SK-N-SH (cell line): ENCODE measurements at regions of chr3 and their contacts with region 1.

Region 1: GRCh38 chr3:149879872-149880271 is 66.9 kb downstream of the RNF13 start:
- DNase-seq: peak; percentile 44
- H3K4me3 ChIP-seq: no peak overlapping the region
- H3K27ac ChIP-seq: peak overlapping the region in 1 of 2 experiments; percentile 51; a peak in 2 of 4 replicates
- H3K4me1 ChIP-seq: no peaks in the 10 kb centered on the region
- H3K27me3 ChIP-seq: no peaks in the 10 kb centered on the region
- CTCF ChIP-seq: peak; percentile 81
- EP300 ChIP-seq: no peak
- RAD21 ChIP-seq: peak; percentile 88

Region 2: DNA sequence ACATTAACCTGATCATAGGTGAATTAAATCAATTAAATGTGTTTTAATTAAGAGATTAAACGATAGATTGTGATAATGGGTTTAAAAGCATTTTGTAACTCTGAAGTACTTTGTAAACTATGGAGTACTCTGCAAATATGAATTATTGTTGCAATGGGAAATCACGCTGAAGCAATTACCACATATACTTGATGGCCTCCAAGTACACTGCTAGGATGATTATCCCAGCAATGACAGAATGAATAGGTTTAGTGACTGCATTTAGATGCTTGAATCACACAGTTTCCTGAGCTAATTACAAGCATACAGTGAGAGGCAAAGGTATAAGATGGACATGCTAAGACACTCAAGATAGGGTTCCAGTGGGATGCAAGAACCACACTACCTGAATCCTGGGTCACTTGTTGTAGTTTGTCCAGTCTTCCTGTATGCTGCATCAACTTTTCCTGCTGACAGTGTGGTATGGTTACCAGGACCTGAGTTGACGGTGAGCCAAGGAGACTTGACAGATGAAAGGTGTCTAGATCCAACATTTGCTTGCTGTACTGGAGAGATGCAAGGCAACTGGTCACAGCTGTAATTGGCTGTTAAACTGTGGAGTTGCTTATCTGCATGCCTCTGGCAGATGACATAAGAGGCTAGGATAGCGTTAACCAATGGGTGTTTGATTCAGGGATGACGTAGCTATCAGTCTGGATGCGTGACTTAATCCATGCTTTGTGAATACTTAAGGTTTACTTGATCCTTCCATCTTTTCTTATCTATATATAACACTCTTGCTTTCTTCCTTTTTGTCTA is 28.9 kb before region 1 on chr3:
- CTCF ChIA-PET with region 1: interaction called, 10 read pairs
- POLR2A ChIA-PET with region 1: no interaction called
- DNase-seq: peak; percentile 6
- H3K4me3 ChIP-seq: no peak overlapping the region
- H3K27ac ChIP-seq: no peak overlapping the region
- H3K4me1 ChIP-seq: peaks cover 0 to 5% of the 10 kb centered on the region in 2 experiments; a peak in 2 of 4 replicates
- H3K27me3 ChIP-seq: no peaks in the 10 kb centered on the region
- CTCF ChIP-seq: no peak
- EP300 ChIP-seq: no peak
- RAD21 ChIP-seq: no peak

Region 3: GRCh38 chr3:149867563-149867962 is 12.3 kb before region 1 on chr3:
- CTCF ChIA-PET with region 1: interaction called, 22 read pairs
- POLR2A ChIA-PET with region 1: no interaction called
- DNase-seq: no peak
- H3K4me3 ChIP-seq: no peak overlapping the region
- H3K27ac ChIP-seq: no peak overlapping the region
- H3K4me1 ChIP-seq: no peaks in the 10 kb centered on the region
- H3K27me3 ChIP-seq: no peaks in the 10 kb centered on the region
- CTCF ChIP-seq: no peak
- EP300 ChIP-seq: no peak
- RAD21 ChIP-seq: no peak

Region 4: GRCh38 chr3:149902498-149903139 is 22.7 kb after region 1 on chr3:
- CTCF ChIA-PET with region 1: interaction called, 26 read pairs
- POLR2A ChIA-PET with region 1: no interaction called
- DNase-seq: peak; percentile 26
- H3K4me3 ChIP-seq: no peak overlapping the region
- H3K27ac ChIP-seq: peak overlapping the region; percentile 2 to 97; a peak in 2 of 4 replicates
- H3K4me1 ChIP-seq: peaks cover 15 to 19% of the 10 kb centered on the region in 2 experiments
- H3K27me3 ChIP-seq: no peaks in the 10 kb centered on the region
- CTCF ChIP-seq: peak; percentile 59
- EP300 ChIP-seq: peak in 1 of 2 experiments; percentile 84; a peak in 2 of 4 replicates
- RAD21 ChIP-seq: no peak

Region 5: DNA sequence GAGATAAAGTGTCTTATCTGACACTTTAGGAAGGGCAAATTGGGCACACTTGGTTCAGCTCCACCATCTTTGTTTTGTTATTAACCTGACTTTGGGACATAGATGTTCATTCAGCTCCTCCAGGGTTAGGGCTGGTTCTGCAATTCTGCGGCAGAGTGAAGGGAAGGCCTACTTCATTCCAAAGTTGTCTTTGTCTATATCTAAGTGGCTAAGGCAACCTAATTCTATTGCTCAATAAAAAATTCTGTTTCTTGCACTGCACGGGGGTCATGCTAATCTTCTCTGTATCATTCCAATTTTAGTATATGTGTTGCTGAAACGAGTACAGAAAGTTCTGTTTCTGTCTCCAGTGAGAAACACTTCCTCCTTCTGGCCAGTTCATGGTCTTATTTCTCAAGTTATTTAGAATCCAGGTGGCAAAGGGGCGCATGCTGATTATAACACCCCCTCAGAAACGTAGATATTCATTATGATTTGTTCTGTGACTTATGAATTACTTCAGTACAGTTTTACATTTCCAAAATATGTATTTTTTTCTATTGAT is 37.3 kb after region 1 on chr3:
- CTCF ChIA-PET with region 1: no interaction called
- POLR2A ChIA-PET with region 1: no interaction called
- DNase-seq: no peak
- H3K4me3 ChIP-seq: no peak overlapping the region
- H3K27ac ChIP-seq: no peak overlapping the region
- H3K4me1 ChIP-seq: no peaks in the 10 kb centered on the region
- H3K27me3 ChIP-seq: no peaks in the 10 kb centered on the region
- CTCF ChIP-seq: no peak
- EP300 ChIP-seq: no peak
- RAD21 ChIP-seq: no peak

Region 6: DNA sequence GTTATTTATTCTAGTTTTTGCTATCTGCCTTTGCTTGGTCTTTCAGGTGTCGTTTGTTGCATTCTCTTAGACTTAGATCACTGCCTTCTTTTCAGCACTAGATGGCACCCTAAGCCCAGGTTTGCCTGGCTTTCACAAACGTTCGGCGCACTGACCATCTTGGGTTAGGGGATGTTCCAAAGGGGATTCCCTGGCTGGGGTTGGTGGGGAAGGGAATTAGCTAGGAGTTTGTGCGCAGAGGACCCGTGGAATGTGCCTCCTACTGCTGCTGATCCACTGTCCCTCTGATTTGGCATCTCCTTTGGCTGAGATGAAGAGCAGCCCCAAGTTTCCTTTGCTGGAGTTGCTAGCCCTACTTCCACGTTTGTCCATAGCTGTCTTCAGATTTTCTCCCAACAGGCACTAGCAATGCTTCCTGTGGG is 57.0 kb after region 1 on chr3:
- CTCF ChIA-PET with region 1: interaction called, 18 read pairs
- POLR2A ChIA-PET with region 1: no interaction called
- DNase-seq: peak; percentile 48
- H3K4me3 ChIP-seq: no peak overlapping the region; a peak in 1 of 4 replicates
- H3K27ac ChIP-seq: no peak overlapping the region
- H3K4me1 ChIP-seq: no peaks in the 10 kb centered on the region
- H3K27me3 ChIP-seq: no peaks in the 10 kb centered on the region
- CTCF ChIP-seq: peak; percentile 63
- EP300 ChIP-seq: no peak
- RAD21 ChIP-seq: peak; percentile 88

Region 7: DNA sequence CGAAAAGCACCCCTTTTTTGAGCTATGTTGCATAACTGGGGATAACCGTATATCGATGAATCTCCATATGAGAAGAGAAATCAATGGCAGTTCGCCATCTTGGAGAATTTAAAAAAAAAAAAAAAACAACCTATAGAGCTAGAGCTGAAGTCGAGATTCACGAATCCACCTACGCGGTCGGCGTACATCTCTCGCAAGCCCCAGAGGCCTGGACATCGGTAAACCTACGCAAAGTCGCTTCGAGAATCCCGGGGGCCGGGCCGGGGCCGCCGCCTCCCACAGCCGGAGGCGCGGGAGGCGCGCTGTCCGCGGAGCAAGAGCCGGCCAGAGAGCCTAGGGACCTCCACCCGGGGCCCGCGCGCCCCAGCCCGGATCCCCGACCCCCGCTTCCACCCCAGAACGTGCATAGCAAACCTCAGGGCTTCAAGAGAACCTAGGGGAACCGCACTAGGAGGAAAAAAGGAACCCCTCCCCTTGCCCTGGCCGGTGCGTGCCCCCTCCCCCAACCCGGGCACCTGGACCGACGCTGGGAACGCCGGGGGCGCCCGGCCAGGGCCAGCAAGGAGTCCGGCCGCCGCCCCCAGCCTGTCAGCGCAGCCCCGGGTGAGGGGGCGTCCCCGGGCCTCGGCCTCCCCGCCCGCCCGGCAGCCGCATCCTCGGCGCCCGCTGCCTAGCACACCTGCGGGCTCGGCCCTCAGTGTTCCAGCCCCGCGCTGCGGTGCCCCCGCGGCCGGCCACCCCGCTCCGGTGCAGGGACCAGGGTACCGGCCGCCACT is 90.3 kb after region 1 on chr3:
- CTCF ChIA-PET with region 1: interaction called, 30 read pairs
- POLR2A ChIA-PET with region 1: interaction called, 4 read pairs
- DNase-seq: peak; percentile 71
- H3K4me3 ChIP-seq: peak overlapping the region; percentile 76 to 93
- H3K27ac ChIP-seq: peak overlapping the region; percentile 94 to 98
- H3K4me1 ChIP-seq: peaks cover 0 to 15% of the 10 kb centered on the region in 2 experiments; a peak in 2 of 4 replicates
- H3K27me3 ChIP-seq: no peaks in the 10 kb centered on the region
- CTCF ChIP-seq: no peak
- EP300 ChIP-seq: no peak
- RAD21 ChIP-seq: no peak